ENCODE measurements at regions of chr2 and their contacts with region 1.

Region 1: DNA sequence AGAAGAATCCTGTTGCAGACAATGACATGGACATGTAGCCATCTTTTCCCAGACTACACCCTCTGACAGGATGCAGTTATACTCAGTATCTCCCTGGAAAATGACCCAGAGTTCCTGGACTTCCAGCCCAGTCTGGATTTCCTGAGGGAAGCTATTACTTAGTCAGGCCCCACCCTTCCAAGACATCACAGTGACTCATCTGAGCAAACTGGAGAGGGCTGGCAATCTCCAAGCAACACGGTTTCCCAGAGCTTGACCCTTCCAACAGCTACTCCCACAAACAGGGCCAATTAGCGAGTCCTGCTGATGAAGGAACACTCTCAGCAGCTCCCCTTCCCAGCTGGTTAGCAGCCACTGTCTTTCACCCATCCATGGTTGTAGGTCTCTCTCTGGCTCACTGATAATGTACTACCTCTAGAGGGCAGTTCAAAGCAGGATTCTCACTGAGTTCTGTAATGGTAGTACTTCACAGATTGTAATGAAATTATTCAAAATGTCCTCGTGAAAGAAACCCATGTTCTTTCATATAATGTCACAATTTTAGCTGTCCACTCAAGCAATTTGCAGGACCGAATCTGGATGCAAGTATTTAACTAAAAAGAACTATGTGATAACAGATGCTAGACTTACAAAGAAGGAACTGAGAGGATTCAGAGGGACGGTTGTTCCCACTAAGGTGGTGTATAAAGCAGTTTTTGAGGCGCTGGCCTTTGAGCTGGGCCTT is 110.2 kb downstream of the MDH1 start:
- DNase-seq: peak; percentile 24
- H3K4me3 ChIP-seq: no peak overlapping the region
- H3K27ac ChIP-seq: no peak overlapping the region
- H3K27me3 ChIP-seq: no peaks in the 10 kb centered on the region
- CTCF ChIP-seq: peak; percentile 75

Region 2: DNA sequence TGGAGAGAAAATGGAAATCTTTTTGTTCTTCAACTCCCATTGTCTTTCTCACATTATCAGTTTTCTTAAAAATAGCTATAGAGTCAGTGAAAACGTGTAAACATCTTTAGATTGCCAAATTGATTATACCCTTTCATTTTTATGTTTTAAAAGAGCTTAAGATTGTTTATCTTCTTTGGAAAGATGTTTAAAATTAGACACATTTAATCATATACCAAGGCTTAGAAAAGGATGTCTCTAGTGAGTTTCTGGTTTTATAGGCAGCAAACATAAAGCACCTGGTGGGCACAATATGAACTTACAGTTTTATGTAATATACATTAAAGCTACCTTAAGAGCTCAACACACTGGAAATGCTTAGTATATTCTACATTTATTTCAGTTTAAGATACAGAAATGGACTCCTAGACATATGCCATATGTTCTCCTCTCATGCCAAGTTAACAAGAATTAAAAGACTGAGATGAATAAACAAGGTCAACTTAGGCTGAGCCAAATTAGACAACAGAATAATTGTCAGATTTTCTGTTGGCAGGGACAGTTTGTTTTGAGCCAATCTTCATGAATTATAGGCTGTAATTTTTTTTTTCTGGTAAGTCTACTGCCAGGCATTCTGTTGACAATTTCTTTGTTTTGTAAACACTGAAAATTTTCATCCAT is 535.7 kb before region 1 on chr2:
- CTCF ChIA-PET with region 1: no interaction called
- POLR2A ChIA-PET with region 1: no interaction called
- DNase-seq: no peak
- H3K4me3 ChIP-seq: no peak overlapping the region
- H3K27ac ChIP-seq: no peak overlapping the region
- H3K27me3 ChIP-seq: no peaks in the 10 kb centered on the region
- CTCF ChIP-seq: no peak

Region 3: DNA sequence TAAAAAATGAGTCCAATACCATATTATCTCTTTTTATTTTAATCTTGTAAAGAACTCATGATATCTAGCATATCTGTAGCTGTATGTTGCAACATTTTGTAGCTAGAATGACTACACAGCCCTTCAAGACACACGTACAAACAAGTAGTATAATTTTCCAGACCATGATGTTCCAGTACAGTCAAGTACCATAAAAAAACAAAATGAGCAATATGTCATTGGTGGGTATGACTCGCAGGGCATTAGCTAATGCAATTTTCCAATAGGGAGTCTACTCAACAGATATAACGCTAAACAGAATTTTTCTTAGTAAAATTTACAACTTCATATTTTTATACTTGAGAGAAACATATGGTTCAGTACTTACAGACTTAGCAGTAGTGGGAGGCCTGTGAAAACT is 89.1 kb after region 1 on chr2:
- CTCF ChIA-PET with region 1: interaction called, 12 read pairs
- POLR2A ChIA-PET with region 1: no interaction called
- DNase-seq: peak; percentile 20
- H3K4me3 ChIP-seq: no peak overlapping the region
- H3K27ac ChIP-seq: no peak overlapping the region
- H3K27me3 ChIP-seq: no peaks in the 10 kb centered on the region
- CTCF ChIP-seq: no peak

Region 4: DNA sequence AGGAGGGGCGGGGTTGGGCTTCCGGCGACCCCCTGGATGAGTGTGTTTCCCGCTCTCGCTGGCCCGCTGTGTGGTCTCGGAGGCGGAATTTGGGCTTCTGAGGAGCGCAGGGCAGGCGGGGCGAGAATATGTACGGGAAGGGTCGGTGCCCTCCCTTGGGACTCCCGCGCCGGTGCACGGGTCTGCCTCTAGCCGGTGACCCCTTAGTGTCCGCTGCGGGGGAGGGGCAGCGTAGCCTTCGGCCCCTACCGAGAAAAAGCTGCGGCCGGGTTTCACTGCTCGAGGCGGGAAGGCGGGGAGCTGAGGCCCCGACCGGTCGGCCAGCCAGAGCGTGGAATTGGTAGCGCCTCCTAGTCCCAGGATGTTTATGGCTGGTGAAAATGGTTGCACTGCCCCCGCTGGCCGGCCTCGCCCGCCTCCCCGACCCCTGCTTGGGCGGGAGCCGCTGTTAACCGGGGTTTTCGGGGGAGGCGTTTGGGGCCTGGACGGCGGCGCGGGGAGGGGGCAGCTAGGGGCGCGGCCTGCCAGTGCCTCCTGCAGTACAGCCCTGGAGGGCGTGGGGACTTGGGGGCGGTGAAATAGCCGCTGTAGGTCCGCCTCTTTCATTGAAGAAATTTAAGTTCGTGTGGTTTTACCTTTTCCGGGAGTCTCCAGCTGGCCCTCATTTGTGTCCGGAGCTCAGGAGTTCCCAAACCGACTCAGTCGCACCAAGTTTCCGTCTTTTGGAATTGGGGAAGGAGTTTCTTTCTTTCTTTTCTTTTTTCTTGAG is 142.5 kb after region 1 on chr2 and contains the start of gene UGP2:
- CTCF ChIA-PET with region 1: interaction called, 16 read pairs
- POLR2A ChIA-PET with region 1: interaction called, 12 read pairs
- DNase-seq: peak; percentile 83
- H3K4me3 ChIP-seq: peak within 1 kb of the TSS; percentile 64
- H3K27ac ChIP-seq: peak within 1 kb of the TSS; percentile 92
- H3K27me3 ChIP-seq: no peaks in the 10 kb centered on the region
- CTCF ChIP-seq: peak; percentile 30; the same call in 1 of the 2 replicates
- polyA plus RNA-seq, gene UGP2: 83.0 and 121 TPM in 2 replicates

Region 5: GRCh38 chr2:63890678-63891077 is 191.7 kb after region 1 on chr2:
- CTCF ChIA-PET with region 1: interaction called, 17 read pairs
- POLR2A ChIA-PET with region 1: no interaction called
- DNase-seq: no peak
- H3K4me3 ChIP-seq: no peak overlapping the region
- H3K27ac ChIP-seq: no peak overlapping the region
- H3K27me3 ChIP-seq: no peaks in the 10 kb centered on the region
- CTCF ChIP-seq: no peak

Measured in AG04450 (cell line).